Testis (tissue), 5 donors: ENCODE measurements at regions of chr1 and their contacts with region 1.

Region 1: DNA sequence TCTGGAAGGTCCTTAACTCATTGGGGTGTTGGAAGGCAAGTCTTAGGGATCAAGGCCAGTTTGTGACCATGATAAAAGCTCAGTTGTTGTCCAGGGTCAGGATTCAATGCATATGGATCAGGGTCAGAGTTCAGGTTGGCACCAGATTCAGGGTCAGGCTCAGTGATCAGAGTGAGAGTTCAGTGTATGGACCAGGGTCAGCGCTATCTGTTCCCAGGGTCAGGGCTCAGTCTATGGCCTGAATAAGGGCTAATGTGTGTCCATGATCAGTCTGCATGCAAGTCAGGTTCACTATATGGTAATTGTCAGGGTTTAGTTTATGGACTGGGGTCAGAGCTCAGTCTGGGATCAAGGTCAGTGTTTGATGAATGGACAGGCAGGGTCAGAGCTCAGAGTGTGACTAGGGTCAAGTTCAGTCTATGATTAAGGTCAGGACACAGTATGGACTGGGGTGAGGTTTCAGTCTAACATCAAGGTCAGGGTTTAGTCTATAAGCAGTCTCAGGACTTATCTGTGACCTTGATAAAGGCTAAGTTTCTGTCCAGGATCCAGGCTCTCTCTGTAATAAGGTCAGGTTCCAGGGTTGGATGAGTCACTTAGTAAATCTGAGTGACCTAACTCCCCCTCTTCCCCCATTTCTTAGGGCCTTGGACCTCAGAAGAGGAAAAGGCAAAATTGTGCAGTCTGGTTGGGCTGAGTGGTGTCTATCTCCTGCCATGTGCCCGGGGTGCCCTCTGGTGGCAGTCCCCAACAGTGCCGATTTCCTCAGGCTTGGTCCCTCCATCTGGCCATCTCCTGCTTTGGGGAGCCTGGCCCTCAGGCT is 23.8 kb downstream of the KNCN start:
- DNase-seq: peak; percentile 90
- H3K4me3 ChIP-seq: no peak overlapping the region
- H3K27ac ChIP-seq: no peak overlapping the region
- H3K4me1 ChIP-seq: peaks cover 4% of the 10 kb centered on the region
- H3K27me3 ChIP-seq: no peaks in the 10 kb centered on the region
- CTCF ChIP-seq: peak; percentile 77 to 88 (median 83)
- POLR2A ChIP-seq: no peak

Region 2: GRCh38 chr1:46401964-46402626 is 125.6 kb before region 1 on chr1:
- intact Hi-C with region 1: loop called (anchors 10 kb)
- DNase-seq: peak; percentile 67
- H3K4me3 ChIP-seq: no peak overlapping the region
- H3K27ac ChIP-seq: no peak overlapping the region
- H3K4me1 ChIP-seq: peaks cover 5% of the 10 kb centered on the region
- H3K27me3 ChIP-seq: no peaks in the 10 kb centered on the region
- CTCF ChIP-seq: no peak
- POLR2A ChIP-seq: no peak

Region 3: GRCh38 chr1:46442317-46443161 is 85.1 kb before region 1 on chr1:
- intact Hi-C with region 1: loop called (anchors 10 kb)
- DNase-seq: peak; percentile 90
- H3K4me3 ChIP-seq: peak overlapping the region in 1 of 2 donors; percentile 49
- H3K27ac ChIP-seq: peak overlapping the region in 1 of 2 donors; percentile 1
- H3K4me1 ChIP-seq: no peaks in the 10 kb centered on the region
- H3K27me3 ChIP-seq: no peaks in the 10 kb centered on the region
- CTCF ChIP-seq: peak; percentile 74 to 93 (median 78)
- POLR2A ChIP-seq: no peak

Region 4: DNA sequence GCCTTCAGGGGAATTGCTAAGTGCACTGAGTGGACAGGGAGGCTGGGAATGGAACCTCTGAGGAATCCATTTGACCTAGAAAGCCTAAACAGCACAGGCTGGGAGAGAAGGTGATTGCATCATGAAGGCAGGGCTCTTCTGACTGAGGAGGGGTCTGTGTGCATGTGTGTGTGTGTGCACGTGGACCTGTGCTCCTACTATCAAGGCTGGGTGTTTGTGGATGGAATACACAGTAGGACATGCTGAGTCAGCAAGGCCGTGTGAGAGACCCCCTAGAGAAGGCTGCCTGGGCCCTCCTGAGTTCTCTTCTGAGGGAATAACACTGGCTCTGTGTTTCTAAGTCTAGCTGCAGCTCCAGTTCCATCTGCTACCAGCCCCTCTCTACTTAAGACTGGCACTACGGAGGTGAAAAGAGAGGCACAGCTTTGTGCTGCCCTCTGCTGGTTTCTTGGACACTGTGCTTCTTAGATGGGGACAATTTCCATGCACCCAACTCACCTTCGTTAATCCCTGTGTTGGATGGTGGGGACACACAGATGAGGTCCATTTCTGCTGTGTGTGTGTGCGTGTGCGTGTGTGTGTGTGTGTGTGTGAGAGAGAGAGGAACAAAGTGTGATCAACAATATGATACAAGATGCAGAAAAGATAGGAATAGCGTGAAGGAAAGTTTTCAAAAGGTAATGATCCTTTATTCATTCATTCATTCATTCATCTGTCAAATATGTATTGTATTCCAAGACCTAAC is 197.5 kb after region 1 on chr1:
- intact Hi-C with region 1: loop called (anchors 5 kb)
- DNase-seq: peak; percentile 86
- H3K4me3 ChIP-seq: no peak overlapping the region
- H3K27ac ChIP-seq: no peak overlapping the region
- H3K4me1 ChIP-seq: no peaks in the 10 kb centered on the region
- H3K27me3 ChIP-seq: no peaks in the 10 kb centered on the region
- CTCF ChIP-seq: peak; percentile 70 to 89 (median 80)
- POLR2A ChIP-seq: no peak